ENCODE measurements at regions of chr1 and their contacts with region 1.

Region 1: GRCh38 chr1:114737314-114737849 is 20.4 kb downstream of the CSDE1 start:
- DNase-seq: no peak
- H3K4me3 ChIP-seq: no peak overlapping the region
- H3K27ac ChIP-seq: no peak overlapping the region
- H3K27me3 ChIP-seq: no peaks in the 10 kb centered on the region
- CTCF ChIP-seq: no peak

Region 2: GRCh38 chr1:114716304-114717170 is 20.8 kb before region 1 on chr1 and contains the start of gene NRAS:
- CTCF ChIA-PET with region 1: no interaction called
- POLR2A ChIA-PET with region 1: interaction called, 14 read pairs
- DNase-seq: peak; percentile 69
- H3K4me3 ChIP-seq: peak within 1 kb of the TSS; percentile 92
- H3K27ac ChIP-seq: peak within 1 kb of the TSS; percentile 95
- H3K27me3 ChIP-seq: no peaks in the 10 kb centered on the region
- CTCF ChIP-seq: no peak
- polyA plus RNA-seq, gene NRAS: 50.7 and 69.8 TPM in 2 replicates

Region 3: DNA sequence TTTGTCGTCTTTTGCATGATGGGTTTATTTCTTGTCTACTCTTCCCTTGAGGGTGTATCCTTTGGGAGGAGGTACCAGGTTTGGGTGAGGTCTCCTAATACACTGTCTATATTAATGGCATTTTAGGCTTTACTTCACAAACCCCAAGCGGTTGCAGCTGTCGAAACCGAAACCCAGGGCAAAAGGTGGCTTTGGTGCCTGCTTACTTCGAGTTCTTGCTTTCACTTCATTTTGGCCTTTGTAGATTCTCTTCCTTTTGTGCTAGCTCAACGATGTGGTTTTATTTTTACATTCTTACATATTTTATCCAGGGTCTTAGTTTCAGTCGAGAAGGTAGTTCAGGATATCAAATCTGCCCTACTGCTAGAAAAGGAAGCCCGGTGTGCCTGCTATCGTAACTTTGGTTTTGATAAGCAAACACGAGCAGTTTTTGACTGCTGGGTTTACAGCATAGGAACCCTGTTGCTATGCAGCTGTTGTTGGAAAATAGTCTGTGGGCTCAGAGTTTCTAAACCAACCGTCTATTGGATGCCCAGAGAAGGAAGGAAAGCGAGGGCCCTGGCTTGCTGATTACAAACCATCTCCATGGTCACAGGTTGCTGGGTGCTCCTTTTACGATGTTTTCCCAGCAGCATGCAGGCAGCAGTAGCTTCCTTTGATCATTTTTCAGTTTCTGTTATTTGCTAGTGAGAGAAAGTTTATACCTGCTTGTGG is 361.8 kb after region 1 on chr1:
- CTCF ChIA-PET with region 1: no interaction called
- POLR2A ChIA-PET with region 1: no interaction called
- DNase-seq: no peak
- H3K4me3 ChIP-seq: peak overlapping the region; percentile 12; the same call in 1 of the 2 replicates
- H3K27ac ChIP-seq: peak overlapping the region; percentile 21
- H3K27me3 ChIP-seq: peaks cover 2% of the 10 kb centered on the region
- CTCF ChIP-seq: no peak

Measured in AG04450 (cell line).